GM18951 (cell line): ENCODE measurements at regions of chr12 and their contacts with region 1.

Region 1: GRCh38 chr12:1804545-1805332 is 15.6 kb upstream of the LRTM2 start:
- POLR2A ChIP-seq: peak; percentile 47

Region 2: DNA sequence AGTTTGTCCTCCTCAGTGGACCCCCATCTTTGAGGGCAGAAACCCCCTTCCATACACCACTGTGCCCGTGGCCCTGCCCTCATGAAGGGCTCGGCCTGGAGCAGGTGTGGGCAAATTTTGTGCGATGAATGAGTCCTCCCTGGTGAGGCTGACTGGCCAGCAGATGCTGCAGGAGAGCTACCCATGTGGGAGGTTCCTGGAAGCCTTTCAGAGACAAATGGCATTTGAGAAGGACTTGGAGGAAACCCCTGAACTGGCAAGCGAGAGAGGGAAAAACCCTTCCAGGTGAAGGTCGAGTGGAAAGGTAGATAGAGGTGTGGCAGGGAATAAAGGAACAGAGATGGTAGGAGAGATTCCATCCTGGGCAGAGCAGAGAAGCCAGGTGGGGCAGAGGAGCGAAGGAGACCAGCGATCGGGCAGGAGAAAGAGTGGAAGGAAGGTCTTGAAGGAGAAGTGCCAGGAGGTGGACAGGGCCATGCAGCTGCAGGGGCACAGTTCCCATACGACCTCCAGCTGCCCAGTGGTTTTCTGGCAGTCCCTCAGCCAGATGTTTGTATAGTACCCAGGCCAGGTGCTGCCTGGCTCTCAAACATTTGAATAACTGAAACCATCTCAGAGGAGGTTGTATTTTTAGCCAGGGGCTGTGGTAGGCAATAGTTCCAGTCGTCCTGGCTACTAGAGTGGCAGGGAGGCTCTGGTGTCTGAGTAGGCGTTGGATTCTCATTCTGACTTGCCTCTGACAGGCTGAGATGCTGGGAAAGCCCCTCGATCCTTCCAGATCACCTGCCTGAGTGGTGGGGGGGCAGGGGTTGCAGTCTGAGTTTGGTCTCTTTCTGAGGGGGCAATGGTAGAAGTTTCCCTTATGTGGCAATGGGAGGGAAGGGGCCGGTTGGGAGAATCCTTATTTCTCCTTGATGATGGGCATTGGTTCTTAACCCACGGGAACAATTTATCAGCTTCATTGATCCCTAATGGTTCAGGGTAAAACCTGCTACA is 250.5 kb before region 1 on chr12:
- in situ Hi-C with region 1: no loop called
- POLR2A ChIP-seq: peak; percentile 22

Region 3: GRCh38 chr12:1594261-1595025 is 210.3 kb before region 1 on chr12 and contains the start of gene FBXL14:
- in situ Hi-C with region 1: no loop called
- POLR2A ChIP-seq: peak; percentile 52

Region 4: DNA sequence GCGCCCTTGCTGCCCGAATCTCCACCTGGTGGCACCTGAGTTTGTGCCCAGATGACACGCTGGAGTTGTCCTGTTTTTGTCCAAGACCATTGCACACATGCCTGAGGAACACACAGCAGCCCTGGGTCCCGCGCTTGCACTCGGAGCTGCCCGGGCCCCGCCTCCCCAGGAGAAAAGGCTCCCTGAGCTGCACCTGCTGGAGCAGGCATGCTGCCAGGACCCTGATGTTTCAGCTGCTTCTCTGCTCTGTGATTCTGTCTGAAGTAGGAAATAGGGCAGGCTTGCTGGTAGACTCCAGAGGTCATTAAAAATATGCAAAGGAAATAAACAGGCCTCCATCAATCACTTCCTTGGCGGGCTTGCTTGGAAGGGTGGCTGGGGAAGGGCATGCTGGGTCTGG is 519.6 kb after region 1 on chr12:
- in situ Hi-C with region 1: loop called (anchors 25 kb)
- POLR2A ChIP-seq: no peak